ENCODE measurements at regions of chr5 and their contacts with region 1.

Region 1: DNA sequence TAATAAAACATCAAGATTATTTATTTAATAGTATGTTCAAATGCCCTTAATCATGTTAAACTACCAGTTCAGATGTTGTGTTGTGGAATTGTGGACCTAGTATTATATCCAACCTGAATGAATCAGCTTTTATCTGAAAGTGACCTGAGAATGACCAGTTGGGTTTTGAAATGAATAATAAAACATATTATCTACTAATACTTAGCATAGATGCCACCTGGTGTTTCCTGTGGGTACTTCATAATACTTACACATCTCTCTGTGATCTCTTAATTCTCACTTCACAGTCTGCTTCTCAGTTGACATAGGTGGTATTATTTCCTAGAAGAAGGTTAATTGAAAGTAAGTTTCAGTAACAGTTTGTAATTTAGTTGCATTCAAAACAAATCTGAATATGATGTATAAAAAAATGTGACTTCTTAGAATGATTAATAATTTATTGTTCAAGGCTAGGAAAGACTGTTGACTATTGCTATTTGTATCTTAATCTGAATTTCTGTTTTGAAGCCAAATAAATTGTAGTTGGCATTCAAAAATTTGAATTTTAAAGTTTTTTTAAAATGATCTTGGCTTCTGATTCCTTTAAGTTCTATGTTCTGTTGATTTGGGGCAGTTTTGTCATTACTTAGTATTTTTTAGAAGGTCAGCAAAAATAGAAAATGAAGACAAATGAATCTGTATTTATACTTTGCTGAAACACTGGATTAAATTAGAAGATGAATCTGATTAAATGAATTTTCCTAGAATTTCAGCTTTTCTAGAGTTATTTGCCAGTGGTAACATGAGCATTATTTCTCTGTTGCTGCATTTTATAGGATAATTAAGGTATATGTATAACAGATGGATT is 48.2 kb downstream of the KIF2A start:
- DNase-seq: no peak
- H3K4me3 ChIP-seq: no peak overlapping the region
- H3K27ac ChIP-seq: no peak overlapping the region
- H3K4me1 ChIP-seq: peaks cover 0 to 4% (median 0%) of the 10 kb centered on the region in 4 donors
- H3K27me3 ChIP-seq: no peaks in the 10 kb centered on the region
- CTCF ChIP-seq: peak; percentile 64 to 67 (median 67)
- EP300 ChIP-seq: no peak
- POLR2A ChIP-seq: no peak

Region 2: DNA sequence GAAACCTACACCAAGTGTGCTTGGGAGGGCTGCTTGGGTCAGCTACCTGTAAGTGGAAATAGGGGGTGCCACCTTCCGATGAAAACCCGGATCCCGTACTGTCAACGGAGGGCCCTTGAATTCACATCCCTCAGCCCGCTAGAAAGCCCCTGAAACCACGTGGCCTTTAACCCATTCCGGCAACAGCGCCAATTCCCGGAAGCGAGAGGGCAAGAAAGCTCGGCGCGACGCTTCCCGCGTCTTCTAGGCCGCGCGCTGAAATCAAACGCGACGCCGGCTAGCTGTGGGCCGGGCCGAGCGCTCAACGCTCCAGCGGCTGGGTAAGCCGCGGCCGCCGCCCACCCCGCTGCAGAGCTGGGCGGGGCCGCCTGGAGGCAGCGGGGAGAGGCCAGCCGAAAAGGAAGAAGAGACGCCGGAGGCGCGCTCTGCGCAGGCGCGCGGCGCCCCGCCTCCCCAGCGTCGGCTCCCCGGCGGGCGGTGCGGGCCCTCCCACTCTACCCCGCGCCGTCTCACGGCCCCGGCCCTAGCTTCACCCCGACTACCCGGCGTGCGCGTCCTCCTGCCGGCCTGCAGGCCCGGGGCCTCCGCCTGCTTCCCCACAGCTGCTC is 48.4 kb before region 1 on chr5 and contains the start of gene KIF2A:
- intact Hi-C with region 1: loop called (anchors 5 kb)
- DNase-seq: peak; percentile 95
- H3K4me3 ChIP-seq: peak within 1 kb of the TSS; percentile 86 to 99 (median 90)
- H3K27ac ChIP-seq: peak within 1 kb of the TSS; percentile 90 to 96 (median 95)
- H3K4me1 ChIP-seq: peaks cover 14 to 32% (median 28%) of the 10 kb centered on the region in 4 donors
- H3K27me3 ChIP-seq: no peaks in the 10 kb centered on the region
- CTCF ChIP-seq: peak; percentile 14 to 36 (median 21)
- EP300 ChIP-seq: no peak
- POLR2A ChIP-seq: no peak
- total RNA-seq, gene KIF2A: 31.6 to 37.1 (median 33.3) TPM

Region 3: GRCh38 chr5:62326302-62326701 is 27.9 kb before region 1 on chr5:
- intact Hi-C with region 1: no loop called
- DNase-seq: no peak
- H3K4me3 ChIP-seq: no peak overlapping the region
- H3K27ac ChIP-seq: no peak overlapping the region
- H3K4me1 ChIP-seq: peaks cover 0 to 7% (median 5%) of the 10 kb centered on the region in 4 donors
- H3K27me3 ChIP-seq: no peaks in the 10 kb centered on the region
- CTCF ChIP-seq: no peak
- EP300 ChIP-seq: no peak
- POLR2A ChIP-seq: no peak

Region 4: GRCh38 chr5:62475072-62475471 is 120.8 kb after region 1 on chr5:
- intact Hi-C with region 1: no loop called
- DNase-seq: no peak
- H3K4me3 ChIP-seq: no peak overlapping the region
- H3K27ac ChIP-seq: no peak overlapping the region
- H3K4me1 ChIP-seq: no peaks in the 10 kb centered on the region
- H3K27me3 ChIP-seq: no peaks in the 10 kb centered on the region
- CTCF ChIP-seq: no peak
- EP300 ChIP-seq: no peak
- POLR2A ChIP-seq: no peak